IMR-90 (cell line): ENCODE measurements at regions of chr17 and their contacts with region 1.

Region 1: GRCh38 chr17:55513885-55514591 is 2.8 kb upstream of the SMIM36 start:
- DNase-seq: peak; percentile 55
- ATAC-seq: peak; percentile 72
- H3K4me3 ChIP-seq: no peak overlapping the region
- H3K27ac ChIP-seq: no peak overlapping the region
- H3K4me1 ChIP-seq: no peaks in the 10 kb centered on the region
- H3K27me3 ChIP-seq: peaks cover 11% of the 10 kb centered on the region
- CTCF ChIP-seq: peak; percentile 95
- POLR2A ChIP-seq: no peak
- RAD21 ChIP-seq: peak; percentile 91

Region 2: GRCh38 chr17:55053855-55054254 is 460.2 kb before region 1 on chr17:
- CTCF ChIA-PET with region 1: no interaction called
- POLR2A ChIA-PET with region 1: no interaction called
- dilution Hi-C with region 1: no loop called
- in situ Hi-C with region 1: no loop called
- intact Hi-C with region 1: loop called (anchors 5 kb)
- DNase-seq: peak; percentile 13
- ATAC-seq: no peak
- H3K4me3 ChIP-seq: no peak overlapping the region
- H3K27ac ChIP-seq: no peak overlapping the region
- H3K4me1 ChIP-seq: no peaks in the 10 kb centered on the region
- H3K27me3 ChIP-seq: no peaks in the 10 kb centered on the region
- CTCF ChIP-seq: peak; percentile 46
- POLR2A ChIP-seq: no peak
- RAD21 ChIP-seq: peak; percentile 49

Region 3: DNA sequence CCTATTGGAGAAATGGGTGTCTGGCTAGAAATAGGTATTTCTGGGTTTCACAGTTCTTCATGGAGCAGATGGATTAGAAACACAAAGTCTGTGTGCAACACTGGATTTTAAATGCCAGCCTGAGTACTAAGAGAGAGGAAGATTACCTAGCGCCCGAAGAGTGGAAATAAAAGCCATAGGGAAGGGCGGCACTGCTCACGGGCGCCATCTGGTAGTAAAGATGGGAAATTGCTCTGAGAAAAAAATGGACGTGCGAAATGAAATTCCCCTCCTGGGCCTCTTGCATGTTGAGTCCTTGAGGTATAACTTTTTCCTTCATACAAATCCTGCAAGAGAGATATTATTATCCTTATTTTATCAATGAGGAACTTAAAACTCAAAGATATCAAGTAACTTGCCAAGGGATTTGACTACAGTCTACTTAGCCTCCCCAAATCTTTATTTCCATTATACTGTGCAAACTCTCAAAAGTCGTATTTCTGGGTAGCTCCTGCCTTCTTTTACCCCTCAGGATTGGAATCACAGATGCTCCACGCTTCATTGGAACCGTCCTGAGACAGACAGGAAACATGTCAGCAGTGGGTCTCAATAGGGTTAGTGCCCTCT is 165.2 kb before region 1 on chr17:
- CTCF ChIA-PET with region 1: interaction called, 3 read pairs
- POLR2A ChIA-PET with region 1: interaction called, 3 read pairs
- dilution Hi-C with region 1: no loop called
- in situ Hi-C with region 1: loop called (anchors 5 kb)
- intact Hi-C with region 1: no loop called
- DNase-seq: peak; percentile 43
- ATAC-seq: peak; percentile 90
- H3K4me3 ChIP-seq: no peak overlapping the region
- H3K27ac ChIP-seq: no peak overlapping the region
- H3K4me1 ChIP-seq: no peaks in the 10 kb centered on the region
- H3K27me3 ChIP-seq: peaks cover 9% of the 10 kb centered on the region
- CTCF ChIP-seq: peak; percentile 85
- POLR2A ChIP-seq: no peak
- RAD21 ChIP-seq: peak; percentile 68

Region 4: GRCh38 chr17:55407641-55408566 is 106.1 kb before region 1 on chr17:
- CTCF ChIA-PET with region 1: no interaction called
- POLR2A ChIA-PET with region 1: no interaction called
- dilution Hi-C with region 1: no loop called
- in situ Hi-C with region 1: loop called (anchors 5 kb)
- intact Hi-C with region 1: no loop called
- DNase-seq: no peak
- ATAC-seq: no peak
- H3K4me3 ChIP-seq: no peak overlapping the region
- H3K27ac ChIP-seq: no peak overlapping the region
- H3K4me1 ChIP-seq: no peaks in the 10 kb centered on the region
- H3K27me3 ChIP-seq: no peaks in the 10 kb centered on the region
- CTCF ChIP-seq: no peak
- POLR2A ChIP-seq: no peak
- RAD21 ChIP-seq: no peak